GM10248 (cell line): ENCODE measurements at regions of chr3 and their contacts with region 1.

Region 1: GRCh38 chr3:102238357-102238756 is 196.5 kb upstream of the ZPLD1 start:
- DNase-seq: no peak
- CTCF ChIP-seq: no peak

Region 2: GRCh38 chr3:102536456-102536855 is 298.1 kb after region 1 on chr3:
- CTCF ChIA-PET with region 1: interaction called, 423 read pairs
- POLR2A ChIA-PET with region 1: no interaction called
- DNase-seq: peak; percentile 17
- CTCF ChIP-seq: peak; percentile 51